Ovary (tissue), 10 donors: ENCODE measurements at regions of chr10 and their contacts with region 1.

Region 1: GRCh38 chr10:124364633-124365032 is 54.1 kb downstream of the OAT start:
- DNase-seq: no peak
- H3K4me3 ChIP-seq: no peak overlapping the region
- H3K27ac ChIP-seq: no peak overlapping the region
- H3K4me1 ChIP-seq: no peaks in the 10 kb centered on the region
- H3K27me3 ChIP-seq: no peaks in the 10 kb centered on the region
- CTCF ChIP-seq: no peak
- EP300 ChIP-seq: no peak
- POLR2A ChIP-seq: no peak

Region 2: DNA sequence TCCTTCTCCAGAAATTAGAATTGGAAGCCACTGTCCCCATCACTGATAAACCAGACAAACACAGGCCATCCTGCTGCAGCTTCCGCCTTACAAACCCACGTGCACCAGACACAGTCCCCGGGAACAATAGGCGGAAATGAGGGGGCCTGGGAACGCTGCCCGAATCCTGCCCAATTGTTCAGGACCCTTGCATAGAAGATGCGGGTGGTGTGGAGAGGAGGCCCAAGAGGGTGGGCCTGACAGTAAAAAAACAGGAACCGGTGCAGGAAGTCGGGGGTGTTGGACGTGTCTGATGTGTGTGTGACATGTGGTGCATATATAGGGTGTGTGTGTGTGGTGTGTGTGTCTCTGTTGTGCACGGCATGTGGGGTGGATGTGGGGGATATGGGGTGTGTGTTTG is 244.7 kb before region 1 on chr10:
- intact Hi-C with region 1: no loop called
- DNase-seq: no peak
- H3K4me3 ChIP-seq: no peak overlapping the region
- H3K27ac ChIP-seq: no peak overlapping the region
- H3K4me1 ChIP-seq: no peaks in the 10 kb centered on the region
- H3K27me3 ChIP-seq: no peaks in the 10 kb centered on the region
- CTCF ChIP-seq: no peak
- EP300 ChIP-seq: no peak
- POLR2A ChIP-seq: no peak

Region 3: GRCh38 chr10:124289851-124290795 is 74.5 kb before region 1 on chr10:
- intact Hi-C with region 1: loop called in 1 of 4 experiments (anchors 5 kb)
- DNase-seq: peak in 1 of 5 donors; percentile 23
- H3K4me3 ChIP-seq: no peak overlapping the region
- H3K27ac ChIP-seq: no peak overlapping the region
- H3K4me1 ChIP-seq: peaks cover 2% of the 10 kb centered on the region
- H3K27me3 ChIP-seq: no peaks in the 10 kb centered on the region
- CTCF ChIP-seq: no peak
- EP300 ChIP-seq: no peak
- POLR2A ChIP-seq: no peak

Region 4: DNA sequence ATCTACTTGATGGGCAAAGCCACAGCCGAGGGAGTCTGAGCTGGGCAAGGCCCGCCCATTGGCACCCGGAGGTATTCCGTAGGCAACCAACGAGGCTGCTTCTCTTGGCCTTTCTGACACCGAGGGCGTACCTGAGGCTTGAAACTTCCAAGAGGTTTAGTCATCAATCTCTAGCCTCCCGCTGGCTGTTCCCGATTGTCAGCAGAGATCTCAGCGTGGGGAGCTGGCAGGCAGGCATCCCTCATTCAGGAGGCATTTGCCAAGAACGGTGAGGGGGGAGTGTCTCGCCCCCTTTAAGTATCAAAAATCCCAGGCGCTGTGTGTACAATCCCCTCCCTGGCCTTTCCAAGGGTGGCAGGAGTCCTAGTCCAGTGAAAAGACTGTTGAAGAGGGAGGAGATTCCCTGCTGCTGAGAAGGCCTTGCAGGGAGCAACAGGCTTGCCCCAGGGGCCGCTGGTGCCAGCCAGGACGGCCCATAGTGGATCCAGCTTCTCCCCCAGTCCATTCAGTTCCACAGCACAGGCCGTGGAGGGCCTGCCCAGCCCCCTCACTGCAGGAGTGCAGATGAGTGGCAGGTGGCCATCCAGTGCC is 14.3 kb after region 1 on chr10:
- intact Hi-C with region 1: no loop called
- DNase-seq: no peak
- H3K4me3 ChIP-seq: no peak overlapping the region
- H3K27ac ChIP-seq: no peak overlapping the region
- H3K4me1 ChIP-seq: no peaks in the 10 kb centered on the region
- H3K27me3 ChIP-seq: no peaks in the 10 kb centered on the region
- CTCF ChIP-seq: no peak
- EP300 ChIP-seq: no peak
- POLR2A ChIP-seq: no peak

Region 5: GRCh38 chr10:124511205-124512039 is 146.8 kb after region 1 on chr10:
- intact Hi-C with region 1: no loop called
- DNase-seq: no peak
- H3K4me3 ChIP-seq: no peak overlapping the region
- H3K27ac ChIP-seq: no peak overlapping the region
- H3K4me1 ChIP-seq: no peaks in the 10 kb centered on the region
- H3K27me3 ChIP-seq: no peaks in the 10 kb centered on the region
- CTCF ChIP-seq: no peak
- EP300 ChIP-seq: no peak
- POLR2A ChIP-seq: no peak

Region 6: DNA sequence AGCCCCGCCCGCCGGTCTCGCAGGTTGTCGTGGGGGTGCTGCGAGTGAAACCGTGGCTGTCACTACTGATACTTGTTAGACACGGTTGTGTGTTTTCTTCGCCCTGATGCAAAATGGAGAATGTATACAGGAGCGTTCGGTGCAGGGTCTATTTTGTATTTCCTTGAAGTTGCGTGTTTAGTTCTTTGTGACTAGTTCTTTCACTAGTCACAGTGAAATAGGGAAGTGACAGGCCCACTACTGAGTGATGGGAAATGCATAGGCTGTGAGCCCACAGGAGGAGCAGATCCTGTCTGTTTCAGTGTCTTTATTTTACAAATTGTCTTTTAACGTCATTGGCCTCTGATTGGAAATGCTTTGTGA is 437.7 kb after region 1 on chr10:
- intact Hi-C with region 1: no loop called
- DNase-seq: no peak
- H3K4me3 ChIP-seq: peak overlapping the region; percentile 79
- H3K27ac ChIP-seq: peak overlapping the region in 1 of 2 donors; percentile 65
- H3K4me1 ChIP-seq: peaks cover 4% of the 10 kb centered on the region
- H3K27me3 ChIP-seq: no peaks in the 10 kb centered on the region
- CTCF ChIP-seq: no peak
- EP300 ChIP-seq: no peak
- POLR2A ChIP-seq: no peak